Mammary epithelial cell (primary cell): ENCODE measurements at regions of chr7 and their contacts with region 1.

Region 1: GRCh38 chr7:1403638-1404459 is 55.4 kb downstream of the MICALL2 start:
- DNase-seq: no peak
- H3K4me3 ChIP-seq: no peak overlapping the region
- H3K27ac ChIP-seq: no peak overlapping the region
- H3K4me1 ChIP-seq: no peaks in the 10 kb centered on the region
- H3K27me3 ChIP-seq: peaks cover 14% of the 10 kb centered on the region
- CTCF ChIP-seq: no peak

Region 2: GRCh38 chr7:1331561-1332488 is 72.0 kb before region 1 on chr7:
- CTCF ChIA-PET with region 1: no interaction called
- dilution Hi-C with region 1: loop called (anchors 10 kb)
- in situ Hi-C with region 1: no loop called
- intact Hi-C with region 1: no loop called
- DNase-seq: no peak
- H3K4me3 ChIP-seq: no peak overlapping the region
- H3K27ac ChIP-seq: no peak overlapping the region
- H3K4me1 ChIP-seq: no peaks in the 10 kb centered on the region
- H3K27me3 ChIP-seq: peaks cover 4% of the 10 kb centered on the region
- CTCF ChIP-seq: no peak